GM18951 (cell line): ENCODE measurements at regions of chr10 and their contacts with region 1.

Region 1: DNA sequence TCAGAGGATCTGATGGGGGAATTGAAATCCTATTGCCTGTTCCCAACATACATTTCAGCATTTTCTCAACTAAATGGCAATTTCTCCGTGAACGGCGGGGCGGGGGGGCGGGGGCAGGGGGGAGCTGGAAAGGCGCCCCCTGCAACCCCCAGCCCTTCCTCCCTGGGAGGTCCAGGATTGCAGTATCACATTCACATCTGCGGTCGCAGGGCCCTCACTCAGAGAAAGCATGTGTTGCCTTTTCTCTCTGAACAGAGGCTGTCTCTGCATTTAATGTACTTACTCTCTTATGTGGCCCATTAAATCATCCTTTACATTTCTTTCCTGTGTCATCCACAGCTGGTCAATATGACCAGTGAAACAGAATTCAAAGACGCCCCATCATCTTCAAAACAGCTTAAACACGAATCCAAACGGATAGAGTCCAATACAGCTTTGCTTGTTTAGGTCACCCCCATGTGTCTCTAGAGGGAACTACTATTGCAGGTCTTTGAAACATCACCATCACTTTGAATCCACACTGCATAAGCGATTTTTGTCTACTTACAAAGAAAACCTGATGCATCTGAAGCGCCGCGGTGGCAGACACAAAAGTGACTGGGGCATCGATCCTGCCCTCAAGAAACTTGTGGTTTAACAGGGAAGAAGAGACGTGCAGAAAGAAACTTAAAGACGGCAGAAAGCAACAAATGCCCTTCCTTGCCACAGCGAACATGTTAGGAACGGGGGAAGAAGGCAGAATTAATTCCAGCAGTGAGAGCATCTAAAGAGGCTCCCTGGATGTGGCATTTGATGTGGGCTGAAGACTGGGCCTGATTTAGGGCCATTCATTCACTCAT is 17.0 kb upstream of the ECHDC3 start:
- POLR2A ChIP-seq: no peak

Region 2: DNA sequence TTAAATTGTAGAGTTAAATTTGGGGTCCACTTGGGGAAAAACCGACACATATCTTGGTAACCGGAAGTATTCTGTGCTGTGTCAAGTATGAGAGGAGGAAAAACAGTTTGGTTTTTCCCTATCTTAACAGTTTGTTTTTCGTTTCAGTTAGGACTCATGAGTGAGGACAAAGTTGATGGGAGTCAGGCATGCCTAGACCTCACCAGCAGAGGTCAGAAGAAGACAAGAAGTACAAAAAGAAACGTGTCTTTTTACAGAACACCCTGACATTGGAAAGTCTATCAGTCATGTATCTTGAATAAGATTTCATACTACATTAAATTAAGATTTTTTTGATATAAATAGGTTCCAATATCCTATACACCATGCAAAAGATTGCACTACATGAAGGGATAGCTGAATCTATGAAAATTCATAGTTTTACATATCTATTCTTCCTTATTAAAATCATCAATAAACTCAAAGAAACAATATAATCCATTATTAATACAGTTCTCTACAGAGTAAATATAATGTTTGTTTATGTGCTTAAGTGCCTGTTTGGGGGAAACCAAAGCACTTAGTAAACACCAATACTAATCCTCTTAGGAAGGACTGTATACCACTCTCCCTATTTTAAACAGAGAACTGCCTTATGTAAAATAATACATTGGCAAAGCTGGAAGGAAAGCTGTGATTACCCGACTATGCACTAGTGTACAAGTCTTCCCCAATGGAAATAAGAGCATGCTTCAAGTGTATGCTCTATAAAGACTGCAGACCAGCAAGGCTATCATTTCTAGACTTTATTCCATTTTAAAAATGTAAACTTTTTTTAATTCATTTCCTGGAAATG is 209.3 kb before region 1 on chr10:
- in situ Hi-C with region 1: loop called (anchors 5 kb)
- POLR2A ChIP-seq: no peak

Region 3: GRCh38 chr10:11602919-11603523 is 122.1 kb before region 1 on chr10:
- in situ Hi-C with region 1: loop called (anchors 10 kb)
- POLR2A ChIP-seq: no peak

Region 4: GRCh38 chr10:12129222-12130111 is 404.3 kb after region 1 on chr10 and contains the start of gene SEC61A2:
- in situ Hi-C with region 1: no loop called
- POLR2A ChIP-seq: peak; percentile 78